Mammary epithelial cell (primary cell): ENCODE measurements at regions of chr1 and their contacts with region 1.

Region 1: GRCh38 chr1:154019940-154020339 is 29.4 kb downstream of the RPS27 start:
- DNase-seq: no peak
- H3K4me3 ChIP-seq: no peak overlapping the region
- H3K27ac ChIP-seq: no peak overlapping the region
- H3K4me1 ChIP-seq: no peaks in the 10 kb centered on the region
- H3K27me3 ChIP-seq: no peaks in the 10 kb centered on the region
- CTCF ChIP-seq: no peak

Region 2: GRCh38 chr1:153880024-153880423 is 139.9 kb before region 1 on chr1:
- CTCF ChIA-PET with region 1: no interaction called
- dilution Hi-C with region 1: no loop called
- in situ Hi-C with region 1: no loop called
- intact Hi-C with region 1: no loop called
- DNase-seq: no peak
- H3K4me3 ChIP-seq: no peak overlapping the region
- H3K27ac ChIP-seq: no peak overlapping the region
- H3K4me1 ChIP-seq: peaks cover 22% of the 10 kb centered on the region
- H3K27me3 ChIP-seq: no peaks in the 10 kb centered on the region
- CTCF ChIP-seq: no peak

Region 3: GRCh38 chr1:153936011-153936802 is 83.7 kb before region 1 on chr1:
- CTCF ChIA-PET with region 1: no interaction called
- dilution Hi-C with region 1: loop called (anchors 5 kb)
- in situ Hi-C with region 1: no loop called
- intact Hi-C with region 1: no loop called
- DNase-seq: no peak
- H3K4me3 ChIP-seq: no peak overlapping the region
- H3K27ac ChIP-seq: no peak overlapping the region
- H3K4me1 ChIP-seq: no peaks in the 10 kb centered on the region
- H3K27me3 ChIP-seq: no peaks in the 10 kb centered on the region
- CTCF ChIP-seq: no peak